ENCODE measurements at regions of chr1 and their contacts with region 1.

Region 1: GRCh38 chr1:57820356-57821095 is 396.7 kb upstream of the DAB1 start:
- DNase-seq: no peak
- H3K4me3 ChIP-seq: no peak overlapping the region
- CTCF ChIP-seq: no peak
- POLR2A ChIP-seq: no peak

Region 2: DNA sequence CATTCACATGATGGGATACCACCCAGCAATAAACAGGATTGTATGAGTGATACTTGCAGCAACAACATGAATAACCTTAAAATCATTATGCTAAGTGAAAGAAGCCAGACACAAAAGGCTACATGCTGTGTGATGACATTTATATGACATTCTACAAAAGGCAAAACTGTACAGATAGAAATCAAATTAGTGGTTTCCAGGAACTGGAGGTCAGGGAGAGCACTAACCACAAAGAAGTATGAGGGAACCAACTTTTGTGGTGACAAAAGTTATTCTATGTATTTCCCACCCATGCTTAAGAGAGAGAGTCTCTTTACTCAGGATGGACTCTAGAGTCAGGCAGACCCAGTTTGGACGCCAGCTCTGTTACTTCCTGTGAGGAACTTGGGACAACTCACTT is 32.2 kb before region 1 on chr1:
- intact Hi-C with region 1: loop called (anchors 1 kb)
- DNase-seq: no peak
- H3K4me3 ChIP-seq: no peak overlapping the region
- CTCF ChIP-seq: no peak
- POLR2A ChIP-seq: no peak

Measured in lower leg skin (tissue), 4 donors.